B cell (primary cell): ENCODE measurements at regions of chr11 and their contacts with region 1.

Region 1: GRCh38 chr11:33329705-33330329 is 72.6 kb downstream of the HIPK3 start:
- DNase-seq: peak; percentile 62
- ATAC-seq: peak; percentile 49
- H3K4me3 ChIP-seq: no peak overlapping the region
- H3K4me3 Mint-ChIP-seq: no peak overlapping the region
- H3K27ac ChIP-seq: no peak overlapping the region
- H3K27ac Mint-ChIP-seq: no peak overlapping the region
- H3K4me1 ChIP-seq: peaks cover 0 to 4% of the 10 kb centered on the region in 2 donors
- H3K4me1 Mint-ChIP-seq: peaks cover 20% of the 10 kb centered on the region
- H3K27me3 ChIP-seq: no peaks in the 10 kb centered on the region
- H3K27me3 Mint-ChIP-seq: no peaks in the 10 kb centered on the region
- CTCF ChIP-seq: peak; percentile 81

Region 2: DNA sequence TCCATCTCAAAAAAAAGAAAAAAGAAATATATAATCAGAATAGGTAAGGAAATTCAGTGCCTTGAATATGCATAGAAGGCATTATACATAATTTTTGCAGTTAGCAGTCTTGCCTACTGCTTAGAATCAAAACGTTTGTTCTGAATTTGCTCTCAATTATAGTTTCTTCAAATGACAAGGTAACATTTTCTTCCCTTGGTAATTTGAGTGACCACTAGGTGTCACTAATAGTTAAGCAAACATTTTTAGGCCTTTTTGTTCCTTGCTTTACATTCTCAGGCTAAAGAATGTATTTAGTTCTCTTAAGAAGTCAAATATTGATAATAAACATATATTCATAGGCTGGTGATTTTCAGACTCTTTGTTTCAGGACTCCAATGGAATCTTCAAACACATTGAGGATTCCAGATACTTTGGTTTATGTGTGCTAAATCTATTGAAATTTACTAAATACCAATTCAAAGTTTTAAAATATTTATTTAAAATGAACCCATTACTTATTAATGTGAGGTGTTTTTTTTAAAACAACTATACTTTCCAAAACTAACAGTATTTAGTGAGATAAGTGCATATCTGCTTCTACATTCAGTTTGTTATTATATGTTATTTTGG is 369.2 kb before region 1 on chr11:
- CTCF ChIA-PET with region 1: interaction called, 5 read pairs
- POLR2A ChIA-PET with region 1: no interaction called
- intact Hi-C with region 1: loop called (anchors 2 kb)
- DNase-seq: peak; percentile 59
- ATAC-seq: no peak
- H3K4me3 ChIP-seq: no peak overlapping the region
- H3K4me3 Mint-ChIP-seq: no peak overlapping the region
- H3K27ac ChIP-seq: no peak overlapping the region
- H3K27ac Mint-ChIP-seq: no peak overlapping the region
- H3K4me1 ChIP-seq: no peaks in the 10 kb centered on the region
- H3K4me1 Mint-ChIP-seq: no peaks in the 10 kb centered on the region
- H3K27me3 ChIP-seq: no peaks in the 10 kb centered on the region
- H3K27me3 Mint-ChIP-seq: no peaks in the 10 kb centered on the region
- CTCF ChIP-seq: peak; percentile 81